Esophagus muscularis mucosa (tissue), 4 donors: ENCODE measurements at regions of chr4 and their contacts with region 1.

Region 1: GRCh38 chr4:173935622-173936405 is 347.7 kb downstream of the FBXO8 start:
- DNase-seq: no peak
- H3K4me3 ChIP-seq: no peak overlapping the region
- H3K27ac ChIP-seq: peak overlapping the region; percentile 72 to 74 (median 73)
- H3K4me1 ChIP-seq: peaks cover 10 to 77% (median 46%) of the 10 kb centered on the region in 4 donors
- H3K27me3 ChIP-seq: no peaks in the 10 kb centered on the region
- CTCF ChIP-seq: no peak
- EP300 ChIP-seq: no peak
- POLR2A ChIP-seq: no peak

Region 2: GRCh38 chr4:173685165-173685830 is 250.5 kb before region 1 on chr4:
- intact Hi-C with region 1: no loop called
- DNase-seq: no peak
- H3K4me3 ChIP-seq: no peak overlapping the region
- H3K27ac ChIP-seq: no peak overlapping the region
- H3K4me1 ChIP-seq: peaks cover 11 to 22% (median 20%) of the 10 kb centered on the region in 4 donors
- H3K27me3 ChIP-seq: no peaks in the 10 kb centered on the region
- CTCF ChIP-seq: no peak
- EP300 ChIP-seq: no peak
- POLR2A ChIP-seq: no peak

Region 3: GRCh38 chr4:174120446-174121295 is 184.9 kb after region 1 on chr4:
- intact Hi-C with region 1: loop called (anchors 10 kb)
- DNase-seq: no peak
- H3K4me3 ChIP-seq: peak overlapping the region; percentile 45 to 58 (median 56)
- H3K27ac ChIP-seq: peak overlapping the region; percentile 67 to 77 (median 75)
- H3K4me1 ChIP-seq: peaks cover 12 to 48% (median 44%) of the 10 kb centered on the region in 4 donors
- H3K27me3 ChIP-seq: no peaks in the 10 kb centered on the region
- CTCF ChIP-seq: peak; percentile 60 to 66 (median 65)
- EP300 ChIP-seq: no peak
- POLR2A ChIP-seq: no peak

Region 4: DNA sequence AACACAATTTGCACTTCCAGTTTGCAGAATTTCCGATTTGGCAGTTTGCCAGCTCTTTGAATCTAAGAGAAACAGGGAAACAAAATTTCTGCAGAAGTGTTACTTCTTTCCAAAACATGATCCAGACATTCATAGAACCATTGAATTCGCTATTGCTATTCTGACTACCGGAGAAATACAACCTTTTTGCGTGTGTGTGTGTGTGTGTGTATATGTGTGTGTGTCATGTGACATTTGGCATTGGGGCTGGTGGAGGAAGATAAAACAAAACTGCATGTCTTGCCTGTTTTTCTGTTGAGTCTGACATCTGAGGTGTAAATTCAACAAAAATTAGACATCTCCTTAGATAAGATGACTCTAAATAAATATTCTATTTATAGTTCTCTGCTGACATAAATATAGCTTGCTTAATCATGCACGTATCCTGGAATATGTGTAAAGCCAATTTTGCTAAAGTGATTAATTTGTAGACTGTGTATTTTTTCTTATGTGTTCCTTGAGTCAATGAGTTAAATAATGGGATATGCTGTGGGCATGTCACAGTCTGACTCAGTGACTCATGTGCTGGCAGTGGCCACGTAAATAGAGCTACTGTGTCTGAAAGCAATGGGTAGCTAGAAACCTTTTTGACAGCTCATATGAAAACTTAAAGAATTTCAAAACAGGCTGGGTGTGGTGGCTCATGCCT is 487.6 kb after region 1 on chr4:
- intact Hi-C with region 1: no loop called
- DNase-seq: no peak
- H3K4me3 ChIP-seq: no peak overlapping the region
- H3K27ac ChIP-seq: no peak overlapping the region
- H3K4me1 ChIP-seq: peaks cover 7 to 12% (median 10%) of the 10 kb centered on the region in 4 donors
- H3K27me3 ChIP-seq: no peaks in the 10 kb centered on the region
- CTCF ChIP-seq: no peak
- EP300 ChIP-seq: no peak
- POLR2A ChIP-seq: no peak